HEK293T (cell line): ENCODE measurements at regions of chr17 and their contacts with region 1.

Region 1: GRCh38 chr17:63929860-63930766 is 2.0 kb downstream of the CD79B start:
- DNase-seq: no peak

Region 2: DNA sequence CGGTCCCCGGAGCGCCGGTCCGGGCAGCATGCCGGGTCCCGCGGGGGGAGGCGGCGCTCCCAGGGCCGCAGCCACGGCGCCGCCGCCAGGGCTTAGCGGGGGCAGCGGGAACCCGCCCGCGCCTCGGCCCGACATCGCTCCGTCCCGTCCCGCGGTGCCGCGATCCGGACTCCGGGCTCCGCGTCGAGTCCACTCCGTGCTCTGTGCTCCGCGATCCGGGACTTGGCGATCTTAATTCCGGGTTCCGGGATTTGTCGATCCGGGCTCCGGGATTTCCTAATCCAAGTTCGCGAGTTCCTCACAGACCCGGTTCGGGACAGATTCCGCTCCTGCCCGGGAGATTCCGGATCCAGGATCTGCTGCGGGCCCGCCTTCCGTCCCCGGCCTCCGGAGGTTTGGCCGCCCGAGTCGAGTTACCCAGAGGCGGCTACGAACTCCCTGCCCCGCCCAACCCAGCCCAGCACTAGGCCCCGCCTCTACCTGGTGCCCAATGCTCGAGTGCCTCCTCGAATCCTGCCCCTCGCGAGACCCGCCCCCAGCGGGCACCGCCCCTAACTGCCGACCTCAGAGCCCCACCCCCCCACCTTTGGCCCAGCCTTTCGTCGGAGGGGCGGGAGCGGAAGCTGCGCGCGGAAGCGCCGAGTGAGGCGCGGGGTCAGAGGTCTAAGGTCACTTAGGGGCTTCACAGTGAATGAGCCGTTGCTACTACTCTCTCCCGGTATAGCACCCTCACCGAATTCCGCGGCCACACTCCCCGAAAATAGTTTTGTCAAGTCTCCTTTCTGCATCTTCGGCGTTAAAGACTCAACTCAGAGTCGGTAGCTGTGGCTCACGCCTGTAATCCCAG is 87.3 kb before region 1 on chr17 and contains the start of gene SMARCD2:
- CTCF ChIA-PET with region 1: no interaction called
- POLR2A ChIA-PET with region 1: no interaction called
- DNase-seq: peak; percentile 99

Region 3: DNA sequence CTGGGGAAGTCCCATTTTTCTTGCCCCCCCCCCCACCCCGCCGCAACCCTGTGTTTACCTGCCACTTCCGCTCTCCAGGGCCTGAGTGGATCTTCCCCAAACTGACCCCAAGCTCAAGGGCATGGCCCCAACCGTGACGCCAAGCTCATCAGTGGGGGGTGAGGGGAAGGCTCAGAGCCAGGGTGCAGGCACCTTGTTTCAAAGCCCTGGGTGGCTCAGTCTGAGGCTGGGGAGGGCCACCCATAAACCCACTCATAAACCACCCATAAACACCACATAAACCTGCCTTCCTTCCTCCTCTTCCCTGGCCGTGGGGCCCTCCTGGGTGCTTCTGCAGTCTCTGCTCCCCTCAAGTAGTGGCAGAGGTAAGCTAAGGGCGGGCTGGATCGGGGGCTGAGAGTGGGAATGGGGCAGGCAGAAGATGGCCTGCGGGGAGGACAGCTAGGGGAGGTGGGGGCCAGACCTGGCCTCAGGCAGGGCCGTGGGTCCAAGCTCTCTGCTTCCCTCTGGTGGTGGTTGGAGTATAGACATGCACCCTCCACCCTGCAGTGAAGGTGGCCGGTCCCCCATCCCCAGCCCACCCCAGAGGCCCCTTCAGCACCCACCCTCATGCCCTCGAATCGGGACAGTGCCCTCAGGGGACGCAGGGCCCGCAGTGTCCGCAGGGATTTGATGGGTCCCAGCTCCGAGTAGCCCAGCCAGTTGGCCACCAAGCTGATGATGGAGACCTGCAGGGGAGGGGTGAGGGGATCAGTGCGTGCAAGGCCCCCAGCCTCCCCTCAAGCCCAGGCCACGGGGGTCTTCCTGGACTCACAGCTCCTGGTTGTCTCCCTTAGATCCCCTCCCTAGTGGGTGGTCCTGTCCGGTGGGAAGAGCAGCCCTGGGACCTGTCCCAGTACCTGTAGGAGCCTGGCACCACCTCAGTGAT is 16.6 kb after region 1 on chr17:
- CTCF ChIA-PET with region 1: interaction called, 11 read pairs
- POLR2A ChIA-PET with region 1: no interaction called
- DNase-seq: peak; percentile 90